Tibial artery (tissue), 4 donors: ENCODE measurements at regions of chrX and their contacts with region 1.

Region 1: GRCh38 chrX:30085571-30085970 is 129.8 kb upstream of the MAGEB2 start:
- DNase-seq: no peak
- H3K4me3 ChIP-seq: no peak overlapping the region
- H3K27ac ChIP-seq: no peak overlapping the region
- H3K4me1 ChIP-seq: no peaks in the 10 kb centered on the region
- H3K27me3 ChIP-seq: no peaks in the 10 kb centered on the region
- CTCF ChIP-seq: no peak

Region 2: GRCh38 chrX:29813174-29813573 is 272.4 kb before region 1 on chrX:
- intact Hi-C with region 1: loop called (anchors 10 kb)
- DNase-seq: no peak
- H3K4me3 ChIP-seq: no peak overlapping the region
- H3K27ac ChIP-seq: no peak overlapping the region
- H3K4me1 ChIP-seq: no peaks in the 10 kb centered on the region
- H3K27me3 ChIP-seq: no peaks in the 10 kb centered on the region
- CTCF ChIP-seq: no peak